Aorta (tissue), 5 donors: ENCODE measurements at regions of chr9 and their contacts with region 1.

Region 1: GRCh38 chr9:133103183-133103986 is 17.7 kb downstream of the RALGDS start:
- DNase-seq: peak; percentile 68 to 90
- ATAC-seq: peak; percentile 79
- H3K4me3 ChIP-seq: no peak overlapping the region
- H3K27ac ChIP-seq: no peak overlapping the region
- H3K4me1 ChIP-seq: no peaks in the 10 kb centered on the region
- H3K27me3 ChIP-seq: no peaks in the 10 kb centered on the region

Region 2: DNA sequence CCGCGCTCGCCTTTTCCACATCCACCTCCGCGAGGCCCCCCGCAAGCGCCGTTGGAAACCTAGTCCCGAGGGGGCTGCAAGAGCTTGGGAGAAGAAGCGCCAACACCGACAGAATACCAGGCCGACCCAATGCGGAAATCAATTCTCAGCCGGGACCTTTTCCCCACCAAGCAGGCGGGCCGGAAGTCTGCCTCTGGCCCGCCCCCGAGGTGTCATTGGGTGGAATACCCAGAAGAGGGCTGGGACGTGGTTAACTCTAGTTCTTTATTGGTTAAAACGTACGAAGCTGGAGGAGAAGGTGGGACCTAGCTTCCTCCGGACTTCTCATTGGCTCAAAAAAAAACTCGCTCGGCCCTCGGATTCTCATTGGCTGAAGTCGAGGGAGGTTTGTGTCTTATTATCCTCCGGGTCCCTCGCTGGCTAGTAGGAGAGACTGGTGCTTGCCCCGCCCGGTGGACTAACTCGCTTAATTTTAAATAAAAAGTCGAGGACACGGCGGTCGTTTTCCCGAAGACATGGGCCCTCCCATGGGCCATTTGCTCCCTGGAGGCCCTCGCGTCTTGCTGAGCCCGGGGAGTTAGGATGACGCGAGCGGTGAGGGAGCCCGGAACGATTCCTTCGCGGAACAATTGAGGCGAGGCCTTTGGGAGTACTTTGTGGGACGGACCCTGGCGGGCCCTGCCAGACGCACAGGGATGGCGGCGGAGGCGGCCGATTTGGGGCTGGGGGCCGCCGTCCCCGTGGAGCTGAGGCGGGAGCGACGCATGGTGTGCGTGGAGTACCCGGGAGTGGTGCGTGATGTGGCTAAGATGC is 72.9 kb before region 1 on chr9 and contains the start of gene GTF3C5:
- intact Hi-C with region 1: loop called in 1 of 2 experiments (anchors 10 kb)
- DNase-seq: peak; percentile 95 to 96
- ATAC-seq: peak; percentile 98
- H3K4me3 ChIP-seq: peak within 1 kb of the TSS; percentile 83 to 92
- H3K27ac ChIP-seq: peak within 1 kb of the TSS in 1 of 2 donors; percentile 80
- H3K4me1 ChIP-seq: peaks cover 2 to 5% of the 10 kb centered on the region in 2 donors
- H3K27me3 ChIP-seq: no peaks in the 10 kb centered on the region
- total RNA-seq, gene GTF3C5: 35.6 to 42.9 TPM

Region 3: GRCh38 chr9:133144137-133144903 is 40.9 kb after region 1 on chr9:
- intact Hi-C with region 1: loop called (anchors 1 to 2 kb)
- DNase-seq: peak; percentile 86 to 89
- ATAC-seq: peak; percentile 76
- H3K4me3 ChIP-seq: no peak overlapping the region
- H3K27ac ChIP-seq: no peak overlapping the region
- H3K4me1 ChIP-seq: no peaks in the 10 kb centered on the region
- H3K27me3 ChIP-seq: no peaks in the 10 kb centered on the region